T-cell (primary cell): ENCODE measurements at regions of chr18 and their contacts with region 1.

Region 1: GRCh38 chr18:3157606-3158005 is 62.2 kb downstream of the MYOM1 start:
- DNase-seq: no peak
- ATAC-seq: no peak
- H3K4me3 ChIP-seq: no peak overlapping the region
- H3K4me3 Mint-ChIP-seq: no peak overlapping the region
- H3K27ac ChIP-seq: no peak overlapping the region
- H3K27ac Mint-ChIP-seq: no peak overlapping the region
- H3K4me1 ChIP-seq: no peaks in the 10 kb centered on the region
- H3K4me1 Mint-ChIP-seq: no peaks in the 10 kb centered on the region
- H3K27me3 ChIP-seq: no peaks in the 10 kb centered on the region
- H3K27me3 Mint-ChIP-seq: no peaks in the 10 kb centered on the region

Region 2: DNA sequence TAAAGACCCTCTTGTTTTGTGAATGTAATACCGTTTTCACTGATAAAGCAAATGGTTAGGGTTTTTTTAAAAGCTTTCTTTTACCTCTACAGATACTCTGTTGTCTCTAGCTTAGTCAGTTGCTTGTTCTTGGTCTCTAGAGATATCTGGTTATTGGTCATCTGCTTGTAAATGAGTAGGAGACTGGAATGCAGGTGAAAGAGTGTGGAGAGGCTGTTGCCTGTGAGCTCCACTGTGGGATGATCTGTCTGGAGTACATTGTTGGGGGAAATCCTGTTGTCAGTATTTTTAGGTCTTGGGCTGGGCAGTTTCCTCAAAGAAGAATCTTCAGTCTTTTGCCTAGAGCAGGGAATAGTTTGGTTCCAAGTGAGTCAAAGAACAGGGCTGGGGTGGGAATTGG is 434.4 kb before region 1 on chr18:
- CTCF ChIA-PET with region 1: no interaction called
- POLR2A ChIA-PET with region 1: no interaction called
- DNase-seq: no peak
- ATAC-seq: no peak
- H3K4me3 ChIP-seq: no peak overlapping the region
- H3K4me3 Mint-ChIP-seq: no peak overlapping the region
- H3K27ac ChIP-seq: no peak overlapping the region
- H3K27ac Mint-ChIP-seq: peak overlapping the region; percentile 74 to 82
- H3K4me1 ChIP-seq: no peaks in the 10 kb centered on the region
- H3K4me1 Mint-ChIP-seq: peaks cover 35 to 49% (median 48%) of the 10 kb centered on the region in 3 donors
- H3K27me3 ChIP-seq: no peaks in the 10 kb centered on the region
- H3K27me3 Mint-ChIP-seq: no peaks in the 10 kb centered on the region

Region 3: GRCh38 chr18:2746274-2746673 is 411.3 kb before region 1 on chr18:
- CTCF ChIA-PET with region 1: no interaction called
- POLR2A ChIA-PET with region 1: no interaction called
- DNase-seq: no peak
- ATAC-seq: no peak
- H3K4me3 ChIP-seq: no peak overlapping the region
- H3K4me3 Mint-ChIP-seq: no peak overlapping the region
- H3K27ac ChIP-seq: peak overlapping the region; percentile 2
- H3K27ac Mint-ChIP-seq: peak overlapping the region; percentile 18 to 74
- H3K4me1 ChIP-seq: no peaks in the 10 kb centered on the region
- H3K4me1 Mint-ChIP-seq: peaks cover 30 to 50% (median 38%) of the 10 kb centered on the region in 3 donors
- H3K27me3 ChIP-seq: no peaks in the 10 kb centered on the region
- H3K27me3 Mint-ChIP-seq: no peaks in the 10 kb centered on the region

Region 4: DNA sequence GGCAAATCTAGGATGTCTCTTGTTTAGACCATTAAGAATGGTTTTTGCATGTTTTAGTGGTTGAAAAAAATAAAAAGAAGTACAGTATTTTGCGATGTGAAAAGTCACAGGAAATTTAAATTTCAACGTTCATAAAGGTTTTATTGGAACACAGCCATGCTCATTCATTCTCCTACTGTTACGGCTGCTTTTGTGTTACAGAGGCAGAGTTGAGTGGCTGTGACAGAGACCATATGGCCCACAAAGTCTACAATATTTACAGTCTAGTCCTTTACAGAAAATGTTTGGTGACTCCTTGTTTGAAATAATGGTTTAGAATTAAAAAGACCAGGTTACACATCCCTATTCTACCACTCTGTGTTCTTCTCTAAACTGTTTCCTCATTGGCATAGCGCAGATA is 14.0 kb after region 1 on chr18:
- CTCF ChIA-PET with region 1: no interaction called
- POLR2A ChIA-PET with region 1: no interaction called
- DNase-seq: no peak
- ATAC-seq: no peak
- H3K4me3 ChIP-seq: no peak overlapping the region
- H3K4me3 Mint-ChIP-seq: no peak overlapping the region
- H3K27ac ChIP-seq: no peak overlapping the region
- H3K27ac Mint-ChIP-seq: no peak overlapping the region
- H3K4me1 ChIP-seq: no peaks in the 10 kb centered on the region
- H3K4me1 Mint-ChIP-seq: no peaks in the 10 kb centered on the region
- H3K27me3 ChIP-seq: no peaks in the 10 kb centered on the region
- H3K27me3 Mint-ChIP-seq: no peaks in the 10 kb centered on the region

Region 5: DNA sequence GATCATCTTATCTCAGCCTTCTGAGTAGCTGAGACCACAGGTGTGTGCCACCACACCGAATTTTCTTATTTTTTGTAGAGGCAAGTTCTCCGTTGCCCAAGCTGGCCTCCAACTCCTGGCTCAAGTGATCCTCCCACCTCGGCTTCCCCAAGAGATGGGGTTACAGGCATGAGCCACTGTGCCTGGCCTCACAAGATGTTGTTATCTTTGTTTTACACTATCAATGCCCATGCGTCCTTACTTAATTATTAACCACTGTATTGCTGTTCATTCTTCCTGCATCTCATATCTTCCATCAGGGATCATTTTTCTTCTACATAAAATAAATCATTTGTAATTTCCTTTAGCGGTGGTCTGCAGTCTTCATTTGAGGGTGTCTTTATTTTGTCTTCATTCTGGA is 474.3 kb after region 1 on chr18:
- CTCF ChIA-PET with region 1: no interaction called
- POLR2A ChIA-PET with region 1: interaction called in 1 of 2 experiments, 10 read pairs
- DNase-seq: no peak
- ATAC-seq: no peak
- H3K4me3 ChIP-seq: no peak overlapping the region
- H3K4me3 Mint-ChIP-seq: no peak overlapping the region
- H3K27ac ChIP-seq: no peak overlapping the region
- H3K27ac Mint-ChIP-seq: no peak overlapping the region
- H3K4me1 ChIP-seq: no peaks in the 10 kb centered on the region
- H3K4me1 Mint-ChIP-seq: no peaks in the 10 kb centered on the region
- H3K27me3 ChIP-seq: no peaks in the 10 kb centered on the region
- H3K27me3 Mint-ChIP-seq: no peaks in the 10 kb centered on the region